Mucosa of descending colon (tissue), 3 donors: ENCODE measurements at regions of chr3 and their contacts with region 1.

Region 1: DNA sequence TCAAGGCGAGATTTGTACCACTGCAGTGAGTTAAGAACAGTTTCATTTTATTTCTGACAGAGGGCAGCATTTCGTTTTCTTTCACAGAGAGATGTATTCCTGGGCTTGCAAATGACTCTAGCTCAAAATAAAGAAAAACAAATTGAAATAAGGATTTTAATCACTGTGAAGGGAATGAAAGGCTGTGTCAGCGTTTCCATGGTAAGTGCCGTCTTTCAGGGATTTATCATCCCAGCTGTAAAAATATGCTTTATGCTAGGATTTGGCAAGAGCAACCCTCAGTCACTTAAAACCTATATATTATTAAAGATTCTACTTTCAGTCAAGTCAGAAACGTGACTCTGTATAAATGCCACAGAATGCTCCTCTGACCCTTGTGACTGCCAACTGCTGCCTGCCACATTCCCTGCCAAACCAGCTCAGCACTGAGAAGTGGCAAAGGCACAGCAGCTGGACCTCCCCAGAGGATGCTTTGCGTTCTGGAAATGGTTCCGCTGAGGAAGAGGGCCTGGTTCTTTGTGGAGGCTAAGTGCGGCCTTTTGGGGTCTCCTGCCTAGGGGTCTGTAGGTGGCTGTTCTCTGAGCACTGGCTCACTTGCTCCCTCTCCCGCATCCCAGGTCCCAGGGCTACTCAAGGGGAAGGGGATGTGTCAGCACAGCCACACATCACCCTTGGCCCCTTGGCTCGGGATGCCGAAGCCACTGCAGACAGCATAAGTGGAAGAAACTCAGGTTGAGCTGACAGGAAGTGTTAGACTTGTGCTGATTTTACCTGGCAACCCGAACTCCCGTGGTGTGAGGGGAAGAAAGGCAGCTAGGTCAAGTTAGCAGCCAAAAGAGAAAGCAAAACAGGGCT is 56.6 kb upstream of the POMGNT2 start:
- DNase-seq: no peak
- ATAC-seq: peak; percentile 69
- H3K4me3 ChIP-seq: no peak overlapping the region
- H3K4me1 ChIP-seq: no peaks in the 10 kb centered on the region
- CTCF ChIP-seq: no peak

Region 2: DNA sequence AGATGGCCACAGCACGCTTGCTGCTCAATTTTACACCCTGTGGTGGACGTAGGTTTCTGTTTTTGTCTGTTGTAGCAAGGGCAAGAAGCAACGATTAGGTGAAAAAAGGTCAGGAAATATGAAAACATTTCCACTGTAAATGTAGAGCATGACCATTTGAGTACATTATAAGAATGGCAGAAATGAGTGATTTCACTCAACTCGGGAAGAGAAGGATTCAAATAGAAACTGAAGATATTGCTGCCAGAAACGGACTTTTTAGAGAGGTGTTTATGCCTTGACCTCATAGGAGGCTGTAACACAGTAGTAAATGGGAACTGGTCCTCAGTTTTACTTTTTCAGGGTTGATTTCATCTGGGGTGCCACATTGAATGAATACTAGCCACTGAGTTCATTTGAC is 216.4 kb before region 1 on chr3:
- intact Hi-C with region 1: no loop called
- DNase-seq: no peak
- ATAC-seq: no peak
- H3K4me3 ChIP-seq: no peak overlapping the region
- H3K4me1 ChIP-seq: no peaks in the 10 kb centered on the region
- CTCF ChIP-seq: no peak

Region 3: GRCh38 chr3:43286115-43286840 is 123.8 kb after region 1 on chr3 and contains the start of gene SNRK:
- intact Hi-C with region 1: loop called in 1 of 2 experiments (anchors 5 kb)
- DNase-seq: peak; percentile 92 to 96 (median 93)
- ATAC-seq: peak; percentile 95
- H3K4me3 ChIP-seq: peak within 1 kb of the TSS; percentile 36
- H3K4me1 ChIP-seq: peaks cover 21% of the 10 kb centered on the region
- CTCF ChIP-seq: no peak
- total RNA-seq, gene SNRK: 33.2 to 47.6 (median 35.2) TPM

Region 4: GRCh38 chr3:43523454-43524053 is 361.1 kb after region 1 on chr3:
- intact Hi-C with region 1: no loop called
- DNase-seq: no peak
- ATAC-seq: no peak
- H3K4me3 ChIP-seq: no peak overlapping the region
- H3K4me1 ChIP-seq: no peaks in the 10 kb centered on the region
- CTCF ChIP-seq: no peak

Region 5: GRCh38 chr3:43723121-43723734 is 560.8 kb after region 1 on chr3:
- intact Hi-C with region 1: no loop called
- DNase-seq: no peak
- ATAC-seq: no peak
- H3K4me3 ChIP-seq: no peak overlapping the region
- H3K4me1 ChIP-seq: no peaks in the 10 kb centered on the region
- CTCF ChIP-seq: no peak